Activated CD4-positive, alpha-beta memory T cell treated with anti-CD3 and anti-CD28 coated beads for 36 hours (primary cell): ENCODE measurements at regions of chr10 and their contacts with region 1.

Region 1: DNA sequence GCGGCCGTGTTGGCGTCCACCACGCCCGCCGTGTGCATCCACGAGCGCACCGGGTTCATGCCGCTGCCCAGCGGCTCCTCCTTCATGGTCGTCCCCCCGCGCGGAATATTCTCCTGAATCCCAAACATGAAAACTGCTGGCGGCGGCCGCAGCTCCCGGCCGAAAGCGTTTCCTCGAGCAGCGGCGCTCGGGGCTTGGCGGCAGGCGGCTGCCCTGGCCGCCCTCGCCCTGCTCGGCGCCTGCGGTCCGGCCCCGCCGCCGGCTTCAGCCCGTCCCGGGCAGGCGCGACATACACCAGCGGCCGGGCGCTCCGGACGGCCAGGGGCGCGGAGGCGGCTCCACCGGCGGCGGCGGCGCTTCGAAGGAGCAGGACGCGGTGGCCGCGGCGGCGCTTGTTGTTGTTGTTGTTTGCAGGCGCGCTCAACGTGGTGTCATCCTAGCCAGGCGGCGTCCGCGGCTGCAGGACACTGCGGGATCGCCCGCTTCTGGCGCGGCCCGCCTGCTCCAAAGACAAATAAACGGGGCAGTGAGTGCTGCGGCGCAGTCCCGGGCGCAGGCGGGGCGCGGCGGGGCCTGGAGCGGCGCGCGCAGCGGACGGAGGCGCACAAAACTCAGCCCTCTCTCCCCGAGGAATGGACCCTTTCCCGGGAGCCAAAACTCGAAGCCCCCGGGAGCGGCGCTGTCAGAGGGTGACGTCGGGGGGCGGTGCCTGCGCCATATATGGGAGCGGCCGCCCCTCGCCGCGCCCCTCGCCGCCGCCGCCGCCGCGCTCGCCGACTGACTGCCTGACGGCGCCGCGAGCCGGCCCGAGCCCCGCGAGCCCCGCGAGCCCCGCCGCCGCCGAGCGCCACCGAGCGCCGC is at the start of gene EBF3:
- DNase-seq: peak; percentile 47
- H3K4me3 Mint-ChIP-seq: peak within 1 kb of the TSS; percentile 63
- H3K27ac Mint-ChIP-seq: no peak within 1 kb of the TSS
- H3K4me1 Mint-ChIP-seq: peaks cover 15% of the 10 kb centered on the region
- H3K27me3 Mint-ChIP-seq: peaks cover 62% of the 10 kb centered on the region
- total RNA-seq, gene EBF3: not detected

Region 2: GRCh38 chr10:129756912-129757901 is 206.7 kb before region 1 on chr10:
- CTCF ChIA-PET with region 1: no interaction called
- POLR2A ChIA-PET with region 1: no interaction called
- intact Hi-C with region 1: no loop called
- DNase-seq: no peak
- H3K4me3 Mint-ChIP-seq: no peak overlapping the region
- H3K27ac Mint-ChIP-seq: no peak overlapping the region
- H3K4me1 Mint-ChIP-seq: peaks cover 5% of the 10 kb centered on the region
- H3K27me3 Mint-ChIP-seq: no peaks in the 10 kb centered on the region

Region 3: GRCh38 chr10:129877773-129878371 is 86.0 kb before region 1 on chr10:
- CTCF ChIA-PET with region 1: no interaction called
- POLR2A ChIA-PET with region 1: no interaction called
- intact Hi-C with region 1: loop called (anchors 10 kb)
- DNase-seq: peak; percentile 49
- H3K4me3 Mint-ChIP-seq: no peak overlapping the region
- H3K27ac Mint-ChIP-seq: no peak overlapping the region
- H3K4me1 Mint-ChIP-seq: no peaks in the 10 kb centered on the region
- H3K27me3 Mint-ChIP-seq: peaks cover 3% of the 10 kb centered on the region